ENCODE measurements at regions of chr7 and their contacts with region 1.

Region 1: DNA sequence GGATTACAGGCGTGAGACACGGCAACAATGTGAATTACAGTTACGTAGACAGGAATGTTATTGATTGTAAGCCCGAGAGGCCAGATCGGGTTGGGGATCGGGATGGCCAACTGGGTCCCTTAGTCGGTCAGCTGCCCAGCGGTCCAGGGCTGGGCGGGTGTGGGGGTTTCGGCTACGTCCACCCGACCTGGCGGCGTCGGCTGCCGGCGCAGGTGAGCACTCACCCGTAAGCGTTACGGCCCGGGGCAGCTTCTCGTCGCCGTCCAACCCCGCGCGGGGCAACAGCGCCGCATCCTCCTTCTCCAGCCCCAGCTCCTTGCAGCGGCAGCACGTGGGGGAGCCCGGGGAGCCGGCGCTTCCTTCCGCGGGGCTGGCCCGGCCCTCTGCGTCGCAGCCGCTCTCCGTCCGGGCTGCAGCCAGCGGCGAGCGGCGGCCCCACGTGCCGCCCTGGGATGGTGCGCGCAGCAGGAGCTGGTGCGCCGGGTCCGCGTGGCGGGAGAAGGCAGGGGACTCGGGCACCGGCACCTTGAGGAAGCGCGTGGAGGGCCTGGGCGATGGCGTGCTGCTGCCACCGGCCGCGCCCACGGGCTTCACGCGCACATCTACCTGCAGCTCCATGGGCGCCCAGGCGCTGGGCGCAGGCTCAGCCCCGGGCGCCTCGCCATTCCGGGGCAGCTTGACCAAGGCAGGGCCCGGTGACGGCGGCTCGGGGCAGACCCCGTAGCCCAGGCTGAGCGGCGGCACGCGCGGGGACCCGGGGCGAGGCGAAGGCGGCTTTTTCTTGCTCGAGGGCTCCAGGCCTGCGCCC is 607 bp downstream of the KLRG2 start:
- DNase-seq: peak; percentile 18
- H3K4me3 Mint-ChIP-seq: peak overlapping the region; percentile 32
- H3K27ac Mint-ChIP-seq: no peak overlapping the region
- H3K4me1 Mint-ChIP-seq: peaks cover 8% of the 10 kb centered on the region
- H3K27me3 Mint-ChIP-seq: peaks cover 52% of the 10 kb centered on the region

Region 2: GRCh38 chr7:139494835-139495579 is 12.1 kb after region 1 on chr7:
- CTCF ChIA-PET with region 1: interaction called, 12 read pairs
- POLR2A ChIA-PET with region 1: interaction called, 4 read pairs
- DNase-seq: peak; percentile 31
- H3K4me3 Mint-ChIP-seq: no peak overlapping the region
- H3K27ac Mint-ChIP-seq: no peak overlapping the region
- H3K4me1 Mint-ChIP-seq: peaks cover 26% of the 10 kb centered on the region
- H3K27me3 Mint-ChIP-seq: peaks cover 13% of the 10 kb centered on the region

Region 3: DNA sequence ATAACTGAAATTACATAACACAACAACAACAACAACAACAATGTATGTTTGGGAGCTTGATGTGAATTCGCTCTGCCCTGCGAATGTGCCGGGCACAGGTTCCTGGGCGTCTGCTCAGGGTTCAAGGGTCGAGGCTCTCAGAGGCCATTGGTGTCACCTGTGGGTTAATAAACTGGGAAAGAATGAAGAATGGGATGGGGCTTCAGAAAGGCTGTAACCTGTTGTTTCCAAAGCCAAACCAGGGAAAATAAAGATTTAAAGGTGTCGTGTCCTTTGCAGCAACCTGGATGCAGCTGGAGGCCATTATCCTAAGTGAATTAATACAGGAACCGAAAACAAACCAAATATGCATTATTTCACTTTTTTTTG is 17.9 kb after region 1 on chr7:
- CTCF ChIA-PET with region 1: interaction called, 12 read pairs
- POLR2A ChIA-PET with region 1: interaction called, 4 read pairs
- DNase-seq: no peak
- H3K4me3 Mint-ChIP-seq: no peak overlapping the region
- H3K27ac Mint-ChIP-seq: no peak overlapping the region
- H3K4me1 Mint-ChIP-seq: peaks cover 12% of the 10 kb centered on the region
- H3K27me3 Mint-ChIP-seq: peaks cover 11% of the 10 kb centered on the region

Measured in activated CD4-positive, alpha-beta memory T cell treated with anti-CD3 and anti-CD28 coated beads, Interleukin-2, amount 10 ng/mL, durations not matched to agents 7 days and 5 days (primary cell).